Activated CD8-positive, alpha-beta T cell treated with anti-CD3 and anti-CD28 coated beads for 36 hours (primary cell): ENCODE measurements at regions of chr2 and their contacts with region 1.

Region 1: DNA sequence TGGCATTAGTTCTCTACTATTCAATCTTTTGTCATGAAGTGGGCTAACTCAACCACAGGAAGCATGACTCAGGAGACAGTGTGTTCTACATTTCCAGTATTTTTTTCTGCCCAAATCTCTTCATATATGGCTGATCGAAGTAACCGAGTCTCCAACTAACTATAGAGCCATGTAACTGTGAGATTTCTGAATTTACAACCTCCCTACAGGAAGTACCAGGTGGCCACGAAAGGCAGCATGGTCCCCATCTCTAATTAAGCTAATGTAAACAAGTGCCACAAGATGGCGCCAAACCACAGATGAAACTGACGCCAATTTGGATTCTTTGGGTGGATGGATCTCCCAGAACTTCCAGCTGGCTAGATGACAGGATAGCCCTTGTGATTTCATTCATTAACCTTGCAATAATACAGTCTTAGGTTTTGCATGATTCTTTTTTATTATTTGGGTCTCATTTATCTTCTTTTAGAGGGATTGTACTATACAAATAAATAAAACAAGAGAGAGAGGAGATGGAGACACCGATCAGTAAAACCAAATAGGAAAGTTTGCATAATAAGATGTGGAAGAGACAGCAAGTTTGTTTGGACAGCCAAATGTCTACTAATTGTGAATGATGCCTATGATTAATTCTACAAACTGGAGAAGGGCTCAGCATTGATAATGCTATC is 18.3 kb upstream of the ARHGAP15 start:
- DNase-seq: peak; percentile 79
- ATAC-seq: peak; percentile 85
- H3K4me3 Mint-ChIP-seq: peak overlapping the region; percentile 64
- H3K27ac Mint-ChIP-seq: peak overlapping the region; percentile 90
- H3K4me1 Mint-ChIP-seq: peaks cover 31% of the 10 kb centered on the region
- H3K27me3 Mint-ChIP-seq: no peaks in the 10 kb centered on the region
- CTCF ChIP-seq: peak; percentile 95

Region 2: GRCh38 chr2:143034292-143035074 is 76.4 kb before region 1 on chr2:
- CTCF ChIA-PET with region 1: interaction called, 10 read pairs
- POLR2A ChIA-PET with region 1: no interaction called
- intact Hi-C with region 1: no loop called
- DNase-seq: peak; percentile 73
- ATAC-seq: peak; percentile 95
- H3K4me3 Mint-ChIP-seq: no peak overlapping the region
- H3K27ac Mint-ChIP-seq: no peak overlapping the region
- H3K4me1 Mint-ChIP-seq: peaks cover 5% of the 10 kb centered on the region
- H3K27me3 Mint-ChIP-seq: peaks cover 3% of the 10 kb centered on the region
- CTCF ChIP-seq: peak; percentile 99

Region 3: DNA sequence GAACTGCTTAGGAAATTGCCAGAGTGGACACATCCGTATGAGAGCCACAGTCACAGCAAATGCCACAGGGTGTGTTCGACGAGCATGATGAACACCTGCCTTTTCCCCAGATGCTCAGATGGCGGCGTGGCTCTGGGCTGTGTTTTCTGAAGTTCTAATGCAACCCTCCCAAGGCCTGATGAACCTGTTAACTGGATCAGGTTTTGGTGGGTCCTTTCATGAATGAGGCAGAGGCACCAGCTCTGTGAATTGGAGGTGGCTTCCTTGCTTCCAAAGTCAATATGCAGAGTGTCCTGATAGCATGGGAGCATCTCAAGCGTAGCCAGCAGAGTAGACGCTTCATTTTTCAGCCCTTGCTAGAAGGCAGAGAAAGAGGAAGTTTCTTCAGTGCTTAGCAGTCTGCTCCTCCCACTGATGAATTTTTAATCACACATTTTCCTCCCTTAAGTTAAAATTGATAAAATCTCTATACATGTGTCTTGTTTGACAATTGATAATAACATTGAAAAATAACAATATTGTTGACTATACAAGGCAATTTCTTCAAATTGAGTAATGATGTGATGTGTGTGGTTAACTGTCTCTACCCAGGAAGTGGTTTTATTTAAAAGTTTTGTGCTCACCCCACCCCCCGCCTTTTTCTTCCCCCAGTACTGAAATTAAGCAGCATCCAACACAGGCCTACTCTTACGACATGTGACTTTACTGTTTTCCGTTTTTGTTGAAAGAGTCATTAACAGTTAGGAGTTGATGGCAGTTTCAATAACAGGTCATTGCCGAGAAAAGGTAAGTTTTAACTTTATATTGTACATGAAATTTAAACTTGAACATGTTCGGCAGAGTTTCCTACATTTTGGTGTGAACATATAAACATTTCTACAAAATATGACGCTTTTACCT is 18.0 kb after region 1 on chr2 and contains the start of gene ARHGAP15:
- CTCF ChIA-PET with region 1: interaction called, 20 read pairs
- POLR2A ChIA-PET with region 1: interaction called, 7 read pairs
- intact Hi-C with region 1: no loop called
- DNase-seq: peak; percentile 91
- ATAC-seq: peak; percentile 77
- H3K4me3 Mint-ChIP-seq: peak within 1 kb of the TSS; percentile 81
- H3K27ac Mint-ChIP-seq: peak within 1 kb of the TSS; percentile 100
- H3K4me1 Mint-ChIP-seq: peaks cover 39% of the 10 kb centered on the region
- H3K27me3 Mint-ChIP-seq: no peaks in the 10 kb centered on the region
- CTCF ChIP-seq: no peak
- total RNA-seq, gene ARHGAP15: 71.3 to 72.8 TPM

Region 4: GRCh38 chr2:143150287-143150686 is 39.4 kb after region 1 on chr2:
- CTCF ChIA-PET with region 1: interaction called, 123 read pairs
- POLR2A ChIA-PET with region 1: no interaction called
- intact Hi-C with region 1: no loop called
- DNase-seq: no peak
- ATAC-seq: no peak
- H3K4me3 Mint-ChIP-seq: peak overlapping the region; percentile 58
- H3K27ac Mint-ChIP-seq: peak overlapping the region; percentile 86
- H3K4me1 Mint-ChIP-seq: peaks cover 80% of the 10 kb centered on the region
- H3K27me3 Mint-ChIP-seq: no peaks in the 10 kb centered on the region
- CTCF ChIP-seq: no peak

Region 5: DNA sequence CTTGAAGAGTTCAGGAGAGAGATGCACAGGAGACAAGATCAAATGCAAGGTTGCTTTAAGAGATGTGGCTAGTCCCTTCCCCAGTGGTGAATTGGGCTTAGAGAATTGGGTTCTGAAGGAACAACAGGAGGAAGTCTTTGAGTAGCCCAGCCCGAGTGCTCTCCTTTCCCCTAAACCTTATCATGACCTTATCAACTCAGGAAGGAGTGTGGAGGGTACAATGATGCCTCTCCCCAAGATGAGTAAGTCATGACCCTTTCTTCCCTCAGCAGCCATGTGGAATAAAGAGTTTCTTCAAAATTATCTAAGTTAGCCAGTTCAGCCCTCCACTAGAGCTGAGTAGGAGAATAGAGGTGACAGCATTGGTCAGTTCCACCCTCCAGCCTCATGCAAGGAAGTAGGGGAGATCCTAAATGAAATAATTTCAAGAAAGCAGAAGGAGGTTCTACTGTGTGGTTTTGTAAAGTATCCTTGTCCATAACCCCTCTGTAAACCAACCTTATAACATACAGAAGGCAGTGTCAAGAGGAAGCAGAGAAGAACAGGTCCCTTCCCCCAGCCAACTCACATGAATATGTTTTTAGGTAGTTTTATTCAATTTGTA is 106.7 kb after region 1 on chr2:
- CTCF ChIA-PET with region 1: interaction called, 33 read pairs
- POLR2A ChIA-PET with region 1: no interaction called
- intact Hi-C with region 1: loop called (anchors 5 kb)
- DNase-seq: no peak
- ATAC-seq: no peak
- H3K4me3 Mint-ChIP-seq: no peak overlapping the region
- H3K27ac Mint-ChIP-seq: peak overlapping the region; percentile 60
- H3K4me1 Mint-ChIP-seq: peaks cover 39% of the 10 kb centered on the region
- H3K27me3 Mint-ChIP-seq: no peaks in the 10 kb centered on the region
- CTCF ChIP-seq: no peak

Region 6: GRCh38 chr2:143230506-143231253 is 119.8 kb after region 1 on chr2:
- CTCF ChIA-PET with region 1: interaction called, 31 read pairs
- POLR2A ChIA-PET with region 1: no interaction called
- intact Hi-C with region 1: no loop called
- DNase-seq: no peak
- ATAC-seq: no peak
- H3K4me3 Mint-ChIP-seq: no peak overlapping the region
- H3K27ac Mint-ChIP-seq: peak overlapping the region; percentile 25
- H3K4me1 Mint-ChIP-seq: peaks cover 37% of the 10 kb centered on the region
- H3K27me3 Mint-ChIP-seq: no peaks in the 10 kb centered on the region
- CTCF ChIP-seq: no peak

Region 7: DNA sequence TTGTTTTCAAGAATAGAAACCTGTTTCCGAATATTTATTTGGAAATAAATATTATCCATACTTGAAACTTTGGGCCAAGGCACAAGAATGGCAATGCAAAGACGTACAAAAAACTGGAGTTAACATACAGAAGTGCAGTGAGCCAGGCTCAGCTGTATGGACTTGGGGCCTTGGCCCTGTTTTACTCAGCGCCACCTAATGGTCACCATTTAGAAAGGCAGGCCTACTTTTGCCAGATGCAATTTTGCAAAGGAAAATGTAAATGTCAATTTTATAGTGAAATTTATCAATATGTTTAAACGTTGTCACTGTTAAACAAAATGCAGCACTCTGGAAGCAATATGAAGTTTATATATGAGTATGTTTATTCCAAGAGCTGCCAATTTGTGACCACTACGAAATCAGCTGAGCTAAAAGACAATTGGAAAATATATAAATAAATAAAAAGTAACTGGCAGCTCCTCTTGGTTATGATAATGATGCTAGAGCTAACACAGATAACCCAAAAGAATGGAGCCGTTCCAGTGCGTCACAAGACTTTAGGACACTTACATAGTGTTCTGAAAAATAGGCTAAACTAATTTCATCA is 173.3 kb after region 1 on chr2:
- CTCF ChIA-PET with region 1: interaction called, 10 read pairs
- POLR2A ChIA-PET with region 1: no interaction called
- intact Hi-C with region 1: no loop called
- DNase-seq: peak; percentile 38
- ATAC-seq: peak; percentile 85
- H3K4me3 Mint-ChIP-seq: no peak overlapping the region
- H3K27ac Mint-ChIP-seq: peak overlapping the region; percentile 42
- H3K4me1 Mint-ChIP-seq: peaks cover 28% of the 10 kb centered on the region
- H3K27me3 Mint-ChIP-seq: no peaks in the 10 kb centered on the region
- CTCF ChIP-seq: peak; percentile 79